ENCODE measurements at regions of chr14 and their contacts with region 1.

Region 1: DNA sequence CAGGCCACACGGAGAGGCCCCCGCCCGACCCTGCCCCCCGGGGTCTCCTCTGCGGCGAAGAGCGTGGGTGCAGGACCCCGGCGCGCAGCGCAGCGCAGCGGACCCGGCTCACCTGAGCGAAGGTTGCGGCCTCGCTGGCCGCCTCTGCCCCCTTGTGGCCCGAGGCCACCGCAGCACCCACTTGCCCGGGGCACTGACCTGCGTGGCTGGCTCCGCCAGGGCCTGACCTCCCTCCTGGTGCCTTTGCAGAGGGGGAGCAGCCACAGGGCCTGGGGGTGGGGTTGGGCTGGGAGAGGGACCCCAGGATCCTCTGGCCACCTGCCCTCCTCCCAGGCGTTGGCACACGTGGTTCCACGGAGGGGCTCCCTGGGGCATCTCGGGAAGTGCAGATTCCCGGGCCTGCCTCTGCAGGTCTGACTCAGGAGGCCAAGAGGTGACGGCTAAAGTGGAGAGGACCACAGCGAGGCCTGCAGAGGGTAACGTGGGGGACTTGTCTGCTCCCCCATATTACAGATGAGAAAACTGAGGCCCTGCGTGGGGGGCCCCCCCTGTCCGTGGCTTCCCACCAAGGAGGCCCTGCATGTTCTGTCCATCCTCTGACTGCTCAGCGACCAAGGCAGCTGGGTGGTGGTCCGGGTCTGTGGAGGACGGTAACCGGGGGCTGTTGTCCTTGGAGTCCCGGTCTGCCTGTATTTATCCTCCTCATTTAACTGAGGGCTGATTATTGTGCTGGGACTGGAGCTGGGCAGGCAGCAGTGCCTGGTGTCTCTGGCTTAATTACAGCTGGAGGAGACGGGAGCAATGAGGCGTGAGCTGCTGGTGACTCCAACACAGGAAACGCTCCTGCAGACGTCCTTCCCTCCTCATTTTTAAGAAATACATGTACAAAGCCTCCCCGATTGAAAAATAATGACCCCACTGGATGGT is 67.9 kb upstream of the BEGAIN start:
- DNase-seq: peak in 1 of 2 experiments; percentile 16
- H3K4me3 ChIP-seq: no peak overlapping the region
- H3K27ac ChIP-seq: no peak overlapping the region
- H3K4me1 ChIP-seq: no peaks in the 10 kb centered on the region
- H3K27me3 ChIP-seq: no peaks in the 10 kb centered on the region
- CTCF ChIP-seq: peak; percentile 57

Region 2: GRCh38 chr14:100383727-100384158 is 271.3 kb before region 1 on chr14:
- CTCF ChIA-PET with region 1: no interaction called
- POLR2A ChIA-PET with region 1: no interaction called
- intact Hi-C with region 1: loop called (anchors 2 kb)
- DNase-seq: no peak
- H3K4me3 ChIP-seq: no peak overlapping the region
- H3K27ac ChIP-seq: no peak overlapping the region
- H3K4me1 ChIP-seq: no peaks in the 10 kb centered on the region
- H3K27me3 ChIP-seq: no peaks in the 10 kb centered on the region
- CTCF ChIP-seq: peak; percentile 75

Region 3: GRCh38 chr14:100592461-100592891 is 62.6 kb before region 1 on chr14:
- CTCF ChIA-PET with region 1: no interaction called
- POLR2A ChIA-PET with region 1: no interaction called
- intact Hi-C with region 1: no loop called
- DNase-seq: no peak
- H3K4me3 ChIP-seq: no peak overlapping the region
- H3K27ac ChIP-seq: no peak overlapping the region
- H3K4me1 ChIP-seq: no peaks in the 10 kb centered on the region
- H3K27me3 ChIP-seq: peaks cover 71% of the 10 kb centered on the region
- CTCF ChIP-seq: no peak

Measured in PC-9 (cell line).